ENCODE measurements at regions of chr7 and their contacts with region 1.

Region 1: GRCh38 chr7:131107337-131108211 is 220.1 kb upstream of the MKLN1 start:
- DNase-seq: peak; percentile 80
- H3K4me3 ChIP-seq: peak overlapping the region; percentile 88
- H3K27ac ChIP-seq: peak overlapping the region; percentile 96
- H3K4me1 ChIP-seq: peaks cover 7% of the 10 kb centered on the region
- H3K27me3 ChIP-seq: no peaks in the 10 kb centered on the region
- CTCF ChIP-seq: no peak

Region 2: GRCh38 chr7:131327626-131328376 is 220.2 kb after region 1 on chr7 and contains the start of gene MKLN1:
- intact Hi-C with region 1: loop called (anchors 10 kb)
- DNase-seq: peak; percentile 92
- H3K4me3 ChIP-seq: peak within 1 kb of the TSS; percentile 76
- H3K27ac ChIP-seq: peak within 1 kb of the TSS; percentile 92
- H3K4me1 ChIP-seq: peaks cover 11% of the 10 kb centered on the region
- H3K27me3 ChIP-seq: no peaks in the 10 kb centered on the region
- CTCF ChIP-seq: no peak
- total RNA-seq, gene MKLN1: 35.1 to 48.7 TPM

Region 3: GRCh38 chr7:131424219-131424822 is 316.7 kb after region 1 on chr7:
- intact Hi-C with region 1: loop called (anchors 10 kb)
- DNase-seq: no peak
- H3K4me3 ChIP-seq: no peak overlapping the region
- H3K27ac ChIP-seq: no peak overlapping the region
- H3K4me1 ChIP-seq: no peaks in the 10 kb centered on the region
- H3K27me3 ChIP-seq: no peaks in the 10 kb centered on the region
- CTCF ChIP-seq: peak; percentile 57

Measured in colonic mucosa (tissue), 4 donors.